ENCODE measurements at regions of chr9 and their contacts with region 1.

Region 1: GRCh38 chr9:112299514-112299913 is 33.9 kb downstream of the PTBP3 start:
- DNase-seq: no peak
- ATAC-seq: no peak
- H3K4me3 Mint-ChIP-seq: no peak overlapping the region
- H3K27ac Mint-ChIP-seq: no peak overlapping the region
- H3K4me1 Mint-ChIP-seq: peaks cover 40% of the 10 kb centered on the region
- H3K27me3 Mint-ChIP-seq: no peaks in the 10 kb centered on the region

Region 2: DNA sequence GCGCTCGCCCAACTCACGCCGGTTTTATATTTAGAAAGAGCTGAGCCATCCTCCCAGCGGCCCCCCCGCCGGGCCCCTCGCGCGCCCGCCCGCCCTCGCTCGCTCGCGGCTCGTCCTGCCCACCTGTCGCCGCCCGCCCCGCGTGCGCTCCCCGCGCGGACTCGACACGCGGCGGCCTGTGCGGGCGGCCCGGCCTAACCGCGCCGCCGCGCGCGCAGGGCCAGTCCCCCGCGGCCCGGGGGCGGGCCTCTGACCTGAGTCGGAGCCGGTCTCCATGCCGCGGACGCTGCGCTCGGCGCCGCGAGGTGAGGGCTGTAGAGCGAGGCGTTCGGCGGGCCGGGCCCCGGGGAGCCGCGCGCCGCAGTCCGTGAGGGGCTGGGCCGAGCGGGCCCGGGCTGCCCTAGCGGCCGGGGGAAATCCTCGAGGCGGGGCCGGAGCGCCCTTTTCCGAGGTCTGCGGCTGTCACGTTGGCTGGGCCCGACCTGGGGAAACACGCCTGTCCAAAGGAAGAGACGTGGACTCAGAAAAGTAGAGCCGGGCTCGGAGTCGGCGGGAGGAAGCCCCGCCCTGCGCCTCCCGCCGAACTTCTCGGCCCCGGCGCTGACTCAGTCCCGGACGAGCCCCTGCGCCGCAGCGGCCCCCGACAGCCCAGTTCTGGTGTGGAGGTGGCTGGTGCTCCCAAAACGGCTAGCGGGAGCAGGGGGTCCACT is 815.5 kb before region 1 on chr9 and contains the start of gene ECPAS:
- CTCF ChIA-PET with region 1: no interaction called
- POLR2A ChIA-PET with region 1: no interaction called
- intact Hi-C with region 1: no loop called
- DNase-seq: peak; percentile 83
- ATAC-seq: peak; percentile 79
- H3K4me3 Mint-ChIP-seq: peak within 1 kb of the TSS; percentile 81
- H3K27ac Mint-ChIP-seq: peak within 1 kb of the TSS; percentile 89
- H3K4me1 Mint-ChIP-seq: peaks cover 28% of the 10 kb centered on the region
- H3K27me3 Mint-ChIP-seq: no peaks in the 10 kb centered on the region
- total RNA-seq, gene ECPAS: 78.4 to 127 TPM

Region 3: DNA sequence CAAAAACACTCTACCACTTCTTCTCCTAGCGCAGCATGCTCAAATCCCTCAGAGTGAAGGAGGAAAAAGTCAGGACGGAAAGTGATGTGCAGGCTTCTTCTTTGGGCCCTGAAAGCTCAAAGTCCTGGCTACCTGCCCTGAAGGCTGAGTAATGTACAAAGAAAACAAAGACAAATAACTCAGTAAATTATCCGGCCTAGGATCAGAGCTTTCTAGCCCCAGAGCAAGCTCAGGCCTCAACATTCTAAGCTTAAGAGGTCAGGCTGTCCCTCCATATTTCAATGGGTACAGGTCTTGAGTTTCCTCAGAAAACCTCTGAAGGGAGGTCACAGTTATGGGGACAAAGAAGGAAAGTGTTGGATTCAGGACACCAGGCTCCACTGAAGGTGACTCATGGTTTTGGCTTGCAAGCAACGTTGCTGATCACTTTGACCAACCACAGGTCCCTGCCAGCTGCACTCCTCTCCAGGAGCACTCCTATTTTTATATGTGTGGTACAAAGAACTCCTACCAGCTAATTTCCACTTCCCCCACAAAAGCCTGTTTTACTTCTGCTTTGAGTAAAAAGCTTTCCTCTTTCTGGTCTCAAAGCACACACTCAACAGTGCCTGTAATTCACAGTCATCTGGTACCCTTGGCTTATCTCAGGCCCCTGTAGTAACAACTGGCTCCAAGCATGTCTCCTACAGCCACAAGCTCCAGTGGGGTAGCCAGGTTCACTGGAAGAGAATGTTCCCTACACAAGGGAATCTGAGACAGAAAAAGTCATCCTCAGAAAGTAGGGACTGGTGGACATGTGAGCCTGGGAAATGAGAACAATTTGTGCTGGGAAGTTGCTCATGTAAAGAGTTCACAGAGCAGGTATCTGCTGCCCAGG is 287.2 kb before region 1 on chr9:
- CTCF ChIA-PET with region 1: no interaction called
- POLR2A ChIA-PET with region 1: no interaction called
- intact Hi-C with region 1: no loop called
- DNase-seq: peak; percentile 43
- ATAC-seq: peak; percentile 97
- H3K4me3 Mint-ChIP-seq: no peak overlapping the region
- H3K27ac Mint-ChIP-seq: peak overlapping the region; percentile 27
- H3K4me1 Mint-ChIP-seq: peaks cover 34% of the 10 kb centered on the region
- H3K27me3 Mint-ChIP-seq: peaks cover 17% of the 10 kb centered on the region

Region 4: DNA sequence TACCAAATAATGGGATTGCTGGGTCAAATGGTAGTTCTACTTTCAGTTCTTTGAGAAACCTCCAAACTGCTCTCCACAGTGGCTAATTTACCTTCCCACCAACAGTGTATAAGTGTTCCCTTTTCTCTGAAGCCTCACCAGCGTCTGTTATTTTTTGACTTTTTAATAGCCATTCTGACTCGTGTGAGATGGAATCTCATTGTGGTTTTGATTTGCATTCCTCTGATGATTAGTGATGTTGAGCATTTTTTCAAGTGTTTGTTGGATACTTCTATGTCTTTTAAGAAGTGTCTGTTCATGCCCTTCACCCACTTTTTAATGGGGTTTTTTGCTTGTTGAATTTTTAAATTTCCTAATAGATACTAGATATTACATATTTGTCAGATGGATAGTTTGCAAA is 96.0 kb before region 1 on chr9:
- CTCF ChIA-PET with region 1: no interaction called
- POLR2A ChIA-PET with region 1: no interaction called
- intact Hi-C with region 1: no loop called
- DNase-seq: no peak
- ATAC-seq: no peak
- H3K4me3 Mint-ChIP-seq: no peak overlapping the region
- H3K27ac Mint-ChIP-seq: no peak overlapping the region
- H3K4me1 Mint-ChIP-seq: no peaks in the 10 kb centered on the region
- H3K27me3 Mint-ChIP-seq: no peaks in the 10 kb centered on the region

Region 5: DNA sequence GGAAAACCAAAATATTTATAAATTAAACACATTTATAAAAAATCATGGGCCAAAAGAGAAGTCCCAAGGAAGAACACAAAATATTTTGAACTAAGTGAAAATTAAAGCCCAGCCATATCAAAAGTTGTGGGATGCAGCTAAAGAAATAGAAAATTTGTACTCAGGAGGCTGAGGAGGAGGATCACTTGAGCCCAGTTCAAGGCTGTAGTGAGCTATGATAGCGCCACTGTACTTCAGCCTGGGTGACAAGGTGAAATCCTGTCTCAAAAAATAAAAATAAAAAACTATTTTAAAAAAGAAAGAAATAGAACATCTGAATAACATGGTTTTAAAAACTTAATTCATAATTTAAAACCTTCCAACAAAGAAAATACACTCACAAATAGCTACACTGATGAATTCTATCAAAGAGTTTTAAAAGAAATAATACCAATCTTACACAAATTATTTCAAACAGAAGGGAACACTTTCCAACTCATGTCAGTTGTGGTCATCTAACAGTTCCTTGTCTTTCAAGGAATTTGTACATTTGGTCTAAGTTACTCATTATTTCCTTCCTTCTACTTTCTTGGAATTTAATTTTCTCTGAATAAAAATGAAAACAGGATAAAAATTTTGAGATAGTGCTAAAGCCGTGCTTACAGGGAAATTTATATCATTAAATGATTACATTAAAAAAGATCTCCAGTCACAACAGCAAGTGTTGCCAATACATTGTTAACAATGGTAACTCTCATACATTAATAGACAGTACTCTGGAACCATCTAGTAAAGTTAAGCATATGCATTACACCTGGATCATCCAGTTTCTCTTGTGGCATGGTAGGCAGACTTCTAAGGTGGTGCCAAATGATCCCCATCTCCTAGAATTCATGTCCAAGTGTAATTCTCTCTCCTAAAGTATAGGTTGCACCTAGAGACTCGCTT is 16.1 kb after region 1 on chr9:
- CTCF ChIA-PET with region 1: interaction called, 4 read pairs
- POLR2A ChIA-PET with region 1: no interaction called
- intact Hi-C with region 1: loop called in 1 of 2 experiments (anchors 1 kb)
- DNase-seq: no peak
- ATAC-seq: no peak
- H3K4me3 Mint-ChIP-seq: no peak overlapping the region
- H3K27ac Mint-ChIP-seq: peak overlapping the region; percentile 88
- H3K4me1 Mint-ChIP-seq: peaks cover 71% of the 10 kb centered on the region
- H3K27me3 Mint-ChIP-seq: no peaks in the 10 kb centered on the region